OCI-LY7 (cell line): ENCODE measurements at regions of chr2 and their contacts with region 1.

Region 1: DNA sequence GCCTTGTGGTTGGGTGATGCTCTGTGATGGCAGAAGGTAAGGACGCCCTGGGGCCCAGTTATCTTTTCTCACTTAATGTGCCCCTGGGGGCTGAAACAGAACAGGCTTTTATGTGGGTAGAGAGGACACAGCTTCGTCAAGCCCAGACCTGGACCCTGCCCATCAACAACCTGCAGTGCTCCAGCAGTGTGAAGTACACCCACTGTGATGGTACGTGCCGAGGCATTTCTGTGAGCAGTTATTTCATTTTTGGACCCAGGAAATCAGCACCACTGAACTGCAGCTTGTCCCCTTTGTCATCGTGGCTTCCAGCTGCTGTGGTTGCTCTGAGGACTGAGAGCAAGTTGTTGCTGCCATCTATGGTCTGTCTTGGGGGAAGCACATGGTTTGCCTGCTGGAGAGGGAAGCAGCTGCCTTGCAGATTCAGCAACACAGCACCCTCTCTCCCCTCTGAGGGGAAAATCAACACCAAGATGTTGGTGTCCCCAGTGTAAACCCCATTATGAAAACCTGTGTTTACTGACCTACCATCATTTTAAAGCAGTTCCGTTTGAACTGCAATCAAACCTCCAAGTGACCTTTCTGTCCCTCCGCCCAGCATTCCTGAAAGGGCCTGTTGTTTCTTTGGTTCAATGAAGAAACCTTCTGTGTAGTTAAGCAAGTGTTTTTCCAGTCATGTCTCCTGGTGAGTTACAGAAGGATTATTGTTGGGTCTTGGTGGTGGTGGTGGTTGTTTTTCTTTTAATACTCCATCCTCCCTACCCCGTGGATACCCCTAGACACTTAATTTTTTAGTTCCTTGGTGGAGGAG is 158.2 kb downstream of the MGAT5 start:
- DNase-seq: peak; percentile 97
- H3K4me3 ChIP-seq: peak overlapping the region; percentile 44
- H3K27ac ChIP-seq: peak overlapping the region; percentile 99
- H3K4me1 ChIP-seq: peaks cover 71% of the 10 kb centered on the region
- CTCF ChIP-seq: peak; percentile 95

Region 2: DNA sequence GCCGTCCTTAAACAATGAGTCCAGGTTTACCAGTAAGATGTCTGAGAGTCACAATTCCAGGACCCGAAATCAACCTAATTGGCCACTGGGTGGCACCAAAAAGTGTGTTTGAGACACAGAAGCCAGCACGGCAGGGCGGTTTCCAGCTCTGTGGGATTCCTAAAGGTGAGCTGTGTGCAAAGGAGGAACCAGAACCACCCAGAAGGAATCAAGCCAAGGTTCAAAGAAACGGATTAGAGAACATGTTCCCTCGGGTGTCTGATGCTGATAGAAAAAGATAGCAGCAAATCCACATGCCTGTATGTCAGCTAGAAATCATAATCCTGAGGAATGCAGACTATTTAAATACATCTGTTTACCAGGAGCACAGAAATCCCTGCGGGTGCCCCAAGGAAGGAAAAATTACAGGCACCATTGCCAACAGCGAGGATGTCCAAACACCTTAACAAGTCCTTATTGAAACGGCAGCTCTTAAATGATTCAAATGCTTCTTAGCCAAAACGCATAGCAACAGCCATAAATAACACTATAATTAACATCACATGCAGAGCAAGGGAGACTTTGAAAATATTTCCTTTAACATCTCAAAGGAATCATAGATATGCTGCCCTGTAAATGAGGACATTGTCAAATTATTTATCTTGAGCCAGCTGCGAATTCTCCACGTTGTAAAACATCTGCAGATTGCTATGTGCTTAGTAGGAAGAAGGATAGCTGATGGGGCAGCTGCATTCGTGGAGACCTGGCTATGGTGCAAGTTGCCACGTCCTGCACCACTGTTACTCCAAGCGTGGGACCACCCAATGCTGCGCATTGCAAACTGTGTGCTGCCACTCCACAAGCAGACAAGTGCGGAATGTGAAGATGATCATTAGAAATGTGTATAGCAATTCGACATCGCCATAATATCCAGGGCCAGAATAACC is 525.0 kb before region 1 on chr2:
- CTCF ChIA-PET with region 1: interaction called, 3 read pairs
- POLR2A ChIA-PET with region 1: no interaction called
- intact Hi-C with region 1: loop called (anchors 1 kb)
- DNase-seq: peak; percentile 76
- H3K4me3 ChIP-seq: no peak overlapping the region
- H3K27ac ChIP-seq: no peak overlapping the region
- H3K4me1 ChIP-seq: no peaks in the 10 kb centered on the region
- CTCF ChIP-seq: peak; percentile 86

Region 3: DNA sequence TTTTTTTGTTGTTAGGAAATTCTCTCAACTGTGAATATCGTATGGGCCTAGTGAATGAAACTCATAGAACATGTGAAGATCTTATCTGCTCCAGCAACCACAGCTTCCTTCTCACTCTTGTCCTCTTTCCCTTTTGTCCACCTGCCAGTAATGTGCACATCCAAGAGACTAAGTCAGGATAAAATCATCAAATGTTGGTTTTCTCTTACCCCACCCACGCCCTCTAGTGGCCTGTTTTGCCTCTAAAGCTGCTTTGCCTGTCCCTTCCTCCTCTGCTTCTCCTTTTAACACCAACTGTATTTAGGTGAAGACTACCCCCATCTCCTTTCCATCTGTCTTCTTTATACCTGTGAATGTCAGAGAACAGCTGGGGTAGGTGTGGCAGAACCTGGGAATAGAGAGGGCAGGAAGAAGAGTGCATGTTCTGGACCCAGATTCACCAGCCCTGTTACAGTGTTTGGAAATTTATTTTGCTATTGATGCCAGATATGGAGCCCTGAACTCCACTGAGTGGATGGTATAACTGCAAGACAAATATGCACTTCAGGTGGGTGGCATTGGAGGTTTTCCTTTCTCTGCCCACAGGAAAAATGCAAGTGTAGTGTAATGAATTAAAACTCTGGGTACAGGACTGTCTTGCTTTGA is 166.6 kb before region 1 on chr2:
- CTCF ChIA-PET with region 1: interaction called, 23 read pairs
- POLR2A ChIA-PET with region 1: interaction called, 26 read pairs
- intact Hi-C with region 1: loop called (anchors 1 kb)
- DNase-seq: peak; percentile 88
- H3K4me3 ChIP-seq: peak overlapping the region; percentile 24
- H3K27ac ChIP-seq: peak overlapping the region; percentile 63
- H3K4me1 ChIP-seq: peaks cover 78% of the 10 kb centered on the region
- CTCF ChIP-seq: peak; percentile 92

Region 4: DNA sequence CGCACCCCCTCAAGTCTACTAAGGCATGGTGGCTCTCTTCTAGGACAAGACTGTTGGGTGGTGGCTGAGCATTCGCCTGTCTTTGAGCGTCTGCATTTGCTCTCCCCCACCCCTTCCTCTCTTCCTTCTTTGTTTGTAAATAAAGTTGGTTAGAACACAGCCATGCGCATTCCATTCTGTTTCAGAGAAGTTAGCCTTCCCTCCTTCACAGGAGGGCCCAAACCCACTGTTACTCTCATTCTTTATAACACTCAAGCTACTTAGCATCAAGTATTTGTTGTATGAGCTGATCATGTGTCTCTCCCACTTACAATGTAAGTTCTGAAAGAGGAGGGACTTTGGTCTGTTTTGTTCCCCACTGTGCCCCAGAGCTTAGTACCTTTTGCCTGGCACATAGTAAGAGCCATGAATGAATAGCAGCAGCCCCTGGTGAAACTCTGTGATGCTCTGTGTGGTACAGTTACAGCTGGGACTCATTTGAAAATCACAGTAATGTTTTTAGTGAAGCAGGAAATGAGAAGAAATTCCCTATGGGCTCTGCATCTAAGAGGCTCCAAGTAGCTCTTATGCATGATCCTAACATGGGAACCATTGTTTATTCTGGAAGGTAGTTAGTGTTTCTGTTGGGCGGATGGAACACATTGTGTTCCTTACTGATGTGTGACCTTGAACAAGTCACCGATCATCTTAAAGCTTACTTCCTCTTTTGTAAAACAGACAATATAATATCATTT is 150.5 kb before region 1 on chr2:
- CTCF ChIA-PET with region 1: interaction called, 4 read pairs
- POLR2A ChIA-PET with region 1: interaction called, 13 read pairs
- intact Hi-C with region 1: loop called (anchors 1 kb)
- DNase-seq: peak; percentile 75
- H3K4me3 ChIP-seq: peak overlapping the region; percentile 40
- H3K27ac ChIP-seq: peak overlapping the region; percentile 91
- H3K4me1 ChIP-seq: peaks cover 86% of the 10 kb centered on the region
- CTCF ChIP-seq: no peak

Region 5: GRCh38 chr2:134401081-134401497 is 10.9 kb before region 1 on chr2:
- CTCF ChIA-PET with region 1: interaction called, 4 read pairs
- POLR2A ChIA-PET with region 1: interaction called, 14 read pairs
- intact Hi-C with region 1: no loop called
- DNase-seq: no peak
- H3K4me3 ChIP-seq: no peak overlapping the region
- H3K27ac ChIP-seq: no peak overlapping the region
- H3K4me1 ChIP-seq: peaks cover 1% of the 10 kb centered on the region
- CTCF ChIP-seq: no peak

Region 6: GRCh38 chr2:134623796-134624195 is 211.8 kb after region 1 on chr2:
- CTCF ChIA-PET with region 1: no interaction called
- POLR2A ChIA-PET with region 1: no interaction called
- intact Hi-C with region 1: no loop called
- DNase-seq: no peak
- H3K4me3 ChIP-seq: no peak overlapping the region
- H3K27ac ChIP-seq: no peak overlapping the region
- H3K4me1 ChIP-seq: no peaks in the 10 kb centered on the region
- CTCF ChIP-seq: no peak